ENCODE measurements at regions of chr1 and their contacts with region 1.

Region 1: GRCh38 chr1:116139592-116140134 is 28.5 kb downstream of the MAB21L3 start:
- DNase-seq: no peak
- ATAC-seq: no peak
- H3K4me3 ChIP-seq: no peak overlapping the region
- H3K4me3 Mint-ChIP-seq: no peak overlapping the region
- H3K27ac ChIP-seq: no peak overlapping the region
- H3K27ac Mint-ChIP-seq: no peak overlapping the region
- H3K4me1 ChIP-seq: no peaks in the 10 kb centered on the region
- H3K4me1 Mint-ChIP-seq: peaks cover 5% of the 10 kb centered on the region
- H3K27me3 ChIP-seq: no peaks in the 10 kb centered on the region
- H3K27me3 Mint-ChIP-seq: peaks cover 4% of the 10 kb centered on the region
- CTCF ChIP-seq: no peak

Region 2: GRCh38 chr1:116076831-116077230 is 62.8 kb before region 1 on chr1:
- CTCF ChIA-PET with region 1: no interaction called
- POLR2A ChIA-PET with region 1: no interaction called
- intact Hi-C with region 1: no loop called
- DNase-seq: no peak
- ATAC-seq: no peak
- H3K4me3 ChIP-seq: no peak overlapping the region
- H3K4me3 Mint-ChIP-seq: no peak overlapping the region
- H3K27ac ChIP-seq: no peak overlapping the region
- H3K27ac Mint-ChIP-seq: no peak overlapping the region
- H3K4me1 ChIP-seq: no peaks in the 10 kb centered on the region
- H3K4me1 Mint-ChIP-seq: no peaks in the 10 kb centered on the region
- H3K27me3 ChIP-seq: no peaks in the 10 kb centered on the region
- H3K27me3 Mint-ChIP-seq: no peaks in the 10 kb centered on the region
- CTCF ChIP-seq: no peak

Region 3: DNA sequence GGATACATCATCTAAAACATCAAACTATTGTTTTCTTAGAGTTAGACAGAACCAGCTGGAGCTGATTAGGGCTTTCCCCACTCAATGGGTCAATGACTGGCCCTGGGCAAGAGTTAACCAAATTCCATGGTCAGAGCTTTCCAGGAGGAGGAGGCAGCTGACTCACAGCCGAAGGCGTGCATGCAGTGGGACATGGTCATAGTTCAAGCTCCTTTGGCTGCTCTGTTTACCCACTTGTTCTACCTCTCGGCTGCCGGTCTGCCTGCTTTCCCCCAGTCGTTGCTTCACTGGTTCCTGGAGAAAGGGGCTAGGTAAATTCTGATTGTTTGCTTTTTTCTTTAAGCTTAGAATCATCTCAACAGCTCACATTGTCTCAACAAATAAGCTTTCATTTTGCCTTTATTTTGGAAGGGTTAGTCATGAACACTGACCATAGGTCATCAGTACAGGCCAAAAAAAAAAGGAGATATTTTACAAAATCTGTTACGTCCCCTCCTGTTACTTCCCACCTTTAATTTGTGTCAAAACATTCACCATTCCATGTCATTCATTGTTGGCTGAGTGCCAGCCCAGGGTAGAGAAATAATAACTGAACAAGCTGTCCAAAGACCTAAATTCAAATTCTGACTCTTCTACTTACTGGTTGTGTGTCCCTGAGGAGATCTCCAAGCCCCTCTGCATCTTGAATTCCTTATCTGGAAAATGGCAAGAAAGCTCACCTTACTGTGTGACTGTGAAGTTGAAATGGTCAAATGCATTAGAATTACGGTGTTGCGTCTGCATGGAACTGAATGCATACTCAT is 16.5 kb before region 1 on chr1:
- CTCF ChIA-PET with region 1: interaction called, 18 read pairs
- POLR2A ChIA-PET with region 1: interaction called, 3 read pairs
- intact Hi-C with region 1: no loop called
- DNase-seq: no peak
- ATAC-seq: no peak
- H3K4me3 ChIP-seq: no peak overlapping the region
- H3K4me3 Mint-ChIP-seq: no peak overlapping the region
- H3K27ac ChIP-seq: no peak overlapping the region
- H3K27ac Mint-ChIP-seq: no peak overlapping the region
- H3K4me1 ChIP-seq: peaks cover 23% of the 10 kb centered on the region
- H3K4me1 Mint-ChIP-seq: peaks cover 25% of the 10 kb centered on the region
- H3K27me3 ChIP-seq: no peaks in the 10 kb centered on the region
- H3K27me3 Mint-ChIP-seq: peaks cover 10% of the 10 kb centered on the region
- CTCF ChIP-seq: no peak

Region 4: DNA sequence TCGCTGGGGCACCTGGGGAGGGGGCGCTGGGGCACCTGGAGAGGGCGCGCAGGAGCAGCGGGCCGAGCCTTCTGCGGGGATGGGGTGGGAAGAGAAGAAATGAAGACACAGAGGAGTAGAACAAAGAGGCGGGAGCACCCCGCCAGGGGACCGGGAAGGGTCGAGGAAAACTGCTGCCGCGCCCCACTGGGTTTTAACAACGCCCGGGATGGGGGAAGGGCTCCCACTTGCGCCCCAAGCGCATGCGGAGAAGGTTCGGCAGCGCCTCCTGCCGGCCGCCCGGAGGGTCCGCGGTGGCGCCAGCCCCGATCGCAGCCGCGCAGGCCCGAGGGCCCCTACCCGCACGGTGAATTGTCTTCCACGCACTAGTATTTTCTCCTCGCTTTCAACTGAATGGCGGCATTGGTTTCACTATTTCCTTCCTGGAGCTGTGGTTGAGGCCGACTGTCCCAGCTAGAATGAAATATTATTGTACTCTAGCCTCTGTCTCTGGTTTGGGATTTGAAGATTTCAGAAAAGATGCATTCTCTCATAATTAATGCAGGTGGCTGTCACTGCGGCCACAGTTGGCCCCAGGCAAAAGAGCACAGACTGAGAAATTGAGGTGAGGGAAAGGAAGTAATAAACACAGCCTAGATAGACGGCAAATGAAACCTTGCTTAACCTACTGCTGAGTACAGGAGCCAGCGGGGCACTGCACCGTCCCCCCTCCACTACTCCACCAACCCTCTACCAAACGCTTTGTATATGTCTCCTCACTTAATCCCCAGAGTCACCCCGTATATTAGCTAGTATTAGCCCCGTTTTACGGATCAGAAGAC is 28.8 kb after region 1 on chr1:
- CTCF ChIA-PET with region 1: interaction called, 63 read pairs
- POLR2A ChIA-PET with region 1: no interaction called
- intact Hi-C with region 1: loop called (anchors 1 kb)
- DNase-seq: peak; percentile 74 to 91 (median 86)
- ATAC-seq: peak; percentile 98
- H3K4me3 ChIP-seq: peak overlapping the region; percentile 61 to 88
- H3K4me3 Mint-ChIP-seq: peak overlapping the region; percentile 77
- H3K27ac ChIP-seq: peak overlapping the region; percentile 48 to 68
- H3K27ac Mint-ChIP-seq: peak overlapping the region; percentile 86
- H3K4me1 ChIP-seq: peaks cover 13% of the 10 kb centered on the region
- H3K4me1 Mint-ChIP-seq: peaks cover 12% of the 10 kb centered on the region
- H3K27me3 ChIP-seq: no peaks in the 10 kb centered on the region
- H3K27me3 Mint-ChIP-seq: no peaks in the 10 kb centered on the region
- CTCF ChIP-seq: peak; percentile 94

Region 5: DNA sequence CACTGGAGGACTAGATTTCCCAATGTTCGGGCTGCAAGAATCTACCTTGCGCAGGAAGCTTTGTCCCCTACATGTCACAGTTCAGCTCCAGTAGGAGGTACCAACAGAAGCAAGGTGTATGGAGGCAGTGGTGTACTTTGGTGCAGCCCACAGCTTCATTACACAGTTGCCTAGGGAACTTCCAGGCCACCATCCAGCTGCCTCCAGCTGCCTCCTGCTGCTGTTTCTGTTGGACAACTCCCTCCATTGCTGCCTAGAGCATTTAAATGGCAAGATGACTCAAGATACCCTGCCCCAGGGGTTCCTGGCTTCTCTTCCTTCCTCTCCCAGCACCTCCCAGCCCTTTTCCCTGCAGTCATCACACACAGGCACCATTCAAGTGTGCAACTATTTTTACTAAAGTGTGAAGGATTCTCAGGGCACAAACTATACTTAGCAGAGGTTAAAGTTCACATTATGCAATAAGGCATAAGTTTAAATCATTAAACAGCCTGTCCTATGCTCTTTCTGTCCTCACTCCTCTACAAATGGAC is 194.4 kb after region 1 on chr1:
- CTCF ChIA-PET with region 1: interaction called, 10 read pairs
- POLR2A ChIA-PET with region 1: no interaction called
- intact Hi-C with region 1: no loop called
- DNase-seq: no peak
- ATAC-seq: no peak
- H3K4me3 ChIP-seq: no peak overlapping the region
- H3K4me3 Mint-ChIP-seq: no peak overlapping the region
- H3K27ac ChIP-seq: no peak overlapping the region
- H3K27ac Mint-ChIP-seq: no peak overlapping the region
- H3K4me1 ChIP-seq: peaks cover 20% of the 10 kb centered on the region
- H3K4me1 Mint-ChIP-seq: peaks cover 48% of the 10 kb centered on the region
- H3K27me3 ChIP-seq: no peaks in the 10 kb centered on the region
- H3K27me3 Mint-ChIP-seq: no peaks in the 10 kb centered on the region
- CTCF ChIP-seq: no peak

Region 6: GRCh38 chr1:116403496-116404136 is 264.0 kb after region 1 on chr1:
- CTCF ChIA-PET with region 1: interaction called, 10 read pairs
- POLR2A ChIA-PET with region 1: interaction called, 3 read pairs
- intact Hi-C with region 1: no loop called
- DNase-seq: no peak
- ATAC-seq: no peak
- H3K4me3 ChIP-seq: no peak overlapping the region
- H3K4me3 Mint-ChIP-seq: no peak overlapping the region
- H3K27ac ChIP-seq: no peak overlapping the region
- H3K27ac Mint-ChIP-seq: peak overlapping the region; percentile 24
- H3K4me1 ChIP-seq: peaks cover 13% of the 10 kb centered on the region
- H3K4me1 Mint-ChIP-seq: peaks cover 26% of the 10 kb centered on the region
- H3K27me3 ChIP-seq: no peaks in the 10 kb centered on the region
- H3K27me3 Mint-ChIP-seq: no peaks in the 10 kb centered on the region
- CTCF ChIP-seq: no peak

Region 7: GRCh38 chr1:116498789-116499628 is 359.3 kb after region 1 on chr1:
- CTCF ChIA-PET with region 1: interaction called, 618 read pairs
- POLR2A ChIA-PET with region 1: interaction called, 8 read pairs
- intact Hi-C with region 1: loop called (anchors 1 kb)
- DNase-seq: peak in 8 of 9 experiments; percentile 20 to 78 (median 52)
- ATAC-seq: peak; percentile 70
- H3K4me3 ChIP-seq: no peak overlapping the region
- H3K4me3 Mint-ChIP-seq: no peak overlapping the region
- H3K27ac ChIP-seq: no peak overlapping the region
- H3K27ac Mint-ChIP-seq: peak overlapping the region; percentile 57
- H3K4me1 ChIP-seq: peaks cover 11% of the 10 kb centered on the region
- H3K4me1 Mint-ChIP-seq: peaks cover 23% of the 10 kb centered on the region
- H3K27me3 ChIP-seq: no peaks in the 10 kb centered on the region
- H3K27me3 Mint-ChIP-seq: no peaks in the 10 kb centered on the region
- CTCF ChIP-seq: peak; percentile 77

Region 8: DNA sequence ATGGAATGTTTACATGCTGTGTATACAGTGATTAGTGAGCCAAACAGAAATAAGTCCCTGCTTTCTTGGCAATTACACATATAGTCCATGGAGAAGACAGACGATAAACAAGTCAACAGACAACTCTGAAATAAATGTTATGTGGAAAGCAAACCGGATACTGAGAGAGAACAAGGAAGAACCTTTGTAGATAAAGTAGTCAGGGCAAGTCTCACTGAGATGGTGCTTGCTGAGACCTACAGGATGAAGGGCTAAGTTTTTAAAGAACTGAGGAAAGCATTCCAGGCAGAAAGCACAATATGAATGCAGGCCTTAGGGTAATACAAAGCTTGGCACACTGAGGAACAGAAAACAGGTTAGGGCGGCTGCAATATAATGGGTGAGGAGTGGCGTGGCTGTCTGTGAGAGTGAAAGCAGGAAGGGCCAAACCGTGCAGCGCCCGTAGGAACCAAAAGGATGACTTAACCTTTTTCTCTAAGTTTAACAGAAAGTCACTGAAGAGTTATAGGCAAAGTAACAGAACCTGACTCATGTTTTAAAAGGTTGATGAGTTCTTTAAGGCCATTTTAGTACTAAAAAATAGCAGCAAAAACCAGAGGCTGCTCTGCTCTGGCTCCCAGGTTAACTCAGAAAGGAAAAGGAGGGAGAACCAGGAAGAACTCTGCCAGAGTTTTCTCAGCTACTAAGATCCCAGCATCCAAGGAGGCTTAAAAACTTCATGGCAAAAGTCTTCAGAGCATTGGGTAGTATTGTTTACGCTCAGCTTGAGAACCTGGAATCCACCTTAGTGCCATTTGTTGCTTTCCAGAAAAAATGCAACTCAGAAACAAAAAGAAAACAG is 911.8 kb after region 1 on chr1:
- CTCF ChIA-PET with region 1: no interaction called
- POLR2A ChIA-PET with region 1: no interaction called
- intact Hi-C with region 1: loop called in 1 of 2 experiments (anchors 2 kb)
- DNase-seq: peak in 6 of 9 experiments; percentile 18 to 63 (median 34)
- ATAC-seq: peak; percentile 13
- H3K4me3 ChIP-seq: peak overlapping the region; percentile 7 to 23
- H3K4me3 Mint-ChIP-seq: peak overlapping the region; percentile 72
- H3K27ac ChIP-seq: peak overlapping the region in 1 of 2 experiments; percentile 52
- H3K27ac Mint-ChIP-seq: peak overlapping the region; percentile 87
- H3K4me1 ChIP-seq: peaks cover 49% of the 10 kb centered on the region
- H3K4me1 Mint-ChIP-seq: peaks cover 68% of the 10 kb centered on the region
- H3K27me3 ChIP-seq: no peaks in the 10 kb centered on the region
- H3K27me3 Mint-ChIP-seq: no peaks in the 10 kb centered on the region
- CTCF ChIP-seq: no peak